ENCODE measurements at regions of chr17 and their contacts with region 1.

Region 1: GRCh38 chr17:81702971-81703746 is at the start of gene MRPL12:
- DNase-seq: peak; percentile 90 to 95
- ATAC-seq: peak; percentile 91 to 96 (median 93)
- H3K4me3 ChIP-seq: peak within 1 kb of the TSS; percentile 71
- H3K4me3 Mint-ChIP-seq: peak within 1 kb of the TSS; percentile 93
- H3K27ac ChIP-seq: peak within 1 kb of the TSS; percentile 91
- H3K27ac Mint-ChIP-seq: peak within 1 kb of the TSS; percentile 94 to 95
- H3K4me1 ChIP-seq: peaks cover 35% of the 10 kb centered on the region
- H3K4me1 Mint-ChIP-seq: peaks cover 14 to 25% of the 10 kb centered on the region in 2 donors
- H3K27me3 ChIP-seq: no peaks in the 10 kb centered on the region
- H3K27me3 Mint-ChIP-seq: no peaks in the 10 kb centered on the region
- CTCF ChIP-seq: peak; percentile 16
- total RNA-seq, gene MRPL12: 16.3 to 24.4 (median 17.5) TPM

Region 2: GRCh38 chr17:81666342-81667191 is 36.6 kb before region 1 on chr17 and contains the starts of genes CCDC137 and OXLD1:
- intact Hi-C with region 1: loop called (anchors 5 kb)
- DNase-seq: peak; percentile 92 to 96
- ATAC-seq: peak; percentile 91 to 99 (median 98)
- H3K4me3 ChIP-seq: peak within 1 kb of the TSS; percentile 89
- H3K4me3 Mint-ChIP-seq: peak within 1 kb of the TSS; percentile 94
- H3K27ac ChIP-seq: peak within 1 kb of the TSS; percentile 83
- H3K27ac Mint-ChIP-seq: peak within 1 kb of the TSS; percentile 89 to 94
- H3K4me1 ChIP-seq: peaks cover 41% of the 10 kb centered on the region
- H3K4me1 Mint-ChIP-seq: peaks cover 15 to 23% of the 10 kb centered on the region in 2 donors
- H3K27me3 ChIP-seq: no peaks in the 10 kb centered on the region
- H3K27me3 Mint-ChIP-seq: no peaks in the 10 kb centered on the region
- CTCF ChIP-seq: no peak
- total RNA-seq, gene CCDC137: 15.6 to 24.2 (median 22.1) TPM
- total RNA-seq, gene OXLD1: 29.9 to 35.0 (median 32.4) TPM

Region 3: GRCh38 chr17:81683584-81684237 is 19.4 kb before region 1 on chr17 and contains the starts of genes ARL16 and HGS:
- intact Hi-C with region 1: loop called (anchors 1 kb)
- DNase-seq: peak; percentile 97 to 99
- ATAC-seq: peak; percentile 96 to 99 (median 98)
- H3K4me3 ChIP-seq: peak within 1 kb of the TSS; percentile 82
- H3K4me3 Mint-ChIP-seq: peak within 1 kb of the TSS; percentile 96
- H3K27ac ChIP-seq: peak within 1 kb of the TSS; percentile 39
- H3K27ac Mint-ChIP-seq: peak within 1 kb of the TSS; percentile 79 to 88
- H3K4me1 ChIP-seq: peaks cover 30% of the 10 kb centered on the region
- H3K4me1 Mint-ChIP-seq: peaks cover 7 to 32% of the 10 kb centered on the region in 2 donors
- H3K27me3 ChIP-seq: no peaks in the 10 kb centered on the region
- H3K27me3 Mint-ChIP-seq: no peaks in the 10 kb centered on the region
- CTCF ChIP-seq: no peak
- total RNA-seq, gene ARL16: 23.3 to 47.9 (median 39.3) TPM
- total RNA-seq, gene HGS: 179 to 186 (median 181) TPM

Region 4: DNA sequence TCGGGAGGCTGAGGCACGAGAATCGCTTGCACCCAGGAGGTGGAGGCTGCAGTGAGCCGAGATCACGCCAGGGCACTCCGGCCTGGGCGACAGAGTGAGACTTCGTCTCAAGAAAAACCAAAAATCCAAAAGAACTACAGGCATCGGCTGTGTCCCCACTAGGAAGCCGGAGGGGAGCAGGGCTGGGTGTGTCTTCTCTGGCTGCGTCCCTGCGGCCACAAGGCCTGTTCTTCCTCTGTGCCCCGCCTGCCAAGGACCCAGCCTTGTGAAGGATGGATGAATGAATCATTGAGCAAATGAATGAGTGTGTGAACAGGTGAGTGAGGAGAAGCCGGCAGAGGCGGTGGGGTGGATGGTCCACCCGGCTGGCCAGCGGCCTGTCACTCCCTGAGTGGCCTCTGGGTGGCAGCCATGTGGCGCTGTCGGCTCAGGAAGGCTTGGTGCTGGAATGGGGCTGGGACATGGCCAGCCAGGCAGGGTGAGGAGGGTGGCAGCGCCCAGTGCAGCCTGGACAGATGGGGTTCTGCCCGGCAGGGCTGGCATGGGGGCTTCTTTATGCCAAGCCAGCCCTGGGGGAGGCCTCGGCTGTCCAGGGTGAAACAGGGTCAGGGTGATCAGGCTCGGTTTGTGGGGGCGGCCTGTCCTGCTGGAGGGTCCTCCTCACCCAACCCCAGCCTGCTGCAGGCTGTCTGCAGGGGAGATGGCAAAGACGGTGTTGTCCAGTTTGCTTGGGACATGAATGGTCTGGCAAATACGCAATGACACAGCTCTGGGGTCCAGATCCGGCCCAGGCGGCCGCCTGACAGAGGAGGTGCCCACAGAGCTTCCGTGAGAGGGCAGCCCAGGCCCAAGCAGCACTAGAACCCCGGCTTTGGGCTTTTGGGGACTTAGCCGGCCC is 30.6 kb after region 1 on chr17:
- intact Hi-C with region 1: no loop called
- DNase-seq: peak; percentile 51 to 71
- ATAC-seq: peak; percentile 88 to 99 (median 92)
- H3K4me3 ChIP-seq: no peak overlapping the region
- H3K4me3 Mint-ChIP-seq: no peak overlapping the region
- H3K27ac ChIP-seq: no peak overlapping the region
- H3K27ac Mint-ChIP-seq: no peak overlapping the region
- H3K4me1 ChIP-seq: peaks cover 3% of the 10 kb centered on the region
- H3K4me1 Mint-ChIP-seq: peaks cover 10 to 12% of the 10 kb centered on the region in 2 donors
- H3K27me3 ChIP-seq: no peaks in the 10 kb centered on the region
- H3K27me3 Mint-ChIP-seq: peaks cover 13 to 18% of the 10 kb centered on the region in 2 donors
- CTCF ChIP-seq: peak; percentile 83